ENCODE measurements at regions of chr5 and their contacts with region 1.

Region 1: DNA sequence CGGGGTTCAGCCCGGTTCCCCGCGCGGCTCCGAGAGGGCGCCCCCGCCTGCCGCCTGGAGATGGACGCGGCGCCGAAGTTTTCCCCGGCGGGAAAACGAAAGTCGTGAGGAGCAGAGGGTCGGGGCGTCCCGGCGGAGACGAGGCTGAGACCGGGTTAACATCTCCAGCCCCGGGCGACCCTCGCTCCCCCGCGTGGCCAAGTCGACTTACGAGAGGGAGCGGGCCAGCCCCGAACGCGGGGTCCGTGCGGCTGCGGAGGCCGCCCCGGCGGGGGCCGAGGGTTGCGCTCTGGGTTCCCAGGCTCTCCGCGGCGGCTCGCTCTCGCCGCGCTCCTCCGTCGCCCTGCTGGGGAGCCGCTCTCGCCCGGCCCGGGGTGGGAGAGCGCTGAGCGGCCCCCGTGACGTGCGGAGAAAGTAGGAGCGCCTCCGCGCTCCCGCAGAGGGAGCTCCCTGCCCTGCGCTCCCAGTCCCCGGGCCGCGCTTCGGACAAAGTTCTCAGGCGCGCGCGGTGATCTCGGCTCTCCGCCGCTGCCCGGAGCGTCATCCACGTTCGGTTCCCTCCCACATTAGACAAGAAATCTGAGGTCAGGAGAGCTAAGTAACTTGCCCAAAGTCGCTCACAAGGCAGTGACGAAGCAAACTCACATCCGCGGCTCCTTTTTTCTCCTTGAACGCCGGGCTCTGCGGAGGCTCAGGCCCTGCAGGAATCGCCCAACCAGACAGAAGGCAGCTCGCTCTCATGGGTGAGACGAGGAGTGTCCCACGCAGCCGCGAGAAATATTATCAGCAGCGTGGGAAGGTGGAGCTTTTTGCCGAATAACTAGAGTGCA is 1.2 kb upstream of the GCNT4 start:
- DNase-seq: peak; percentile 67
- H3K4me3 Mint-ChIP-seq: peak overlapping the region; percentile 86
- H3K27ac Mint-ChIP-seq: peak overlapping the region; percentile 92
- H3K4me1 Mint-ChIP-seq: peaks cover 73% of the 10 kb centered on the region
- H3K27me3 Mint-ChIP-seq: no peaks in the 10 kb centered on the region

Region 2: GRCh38 chr5:74112372-74113195 is 940.9 kb before region 1 on chr5:
- CTCF ChIA-PET with region 1: no interaction called
- intact Hi-C with region 1: no loop called
- DNase-seq: no peak
- H3K4me3 Mint-ChIP-seq: no peak overlapping the region
- H3K27ac Mint-ChIP-seq: no peak overlapping the region
- H3K4me1 Mint-ChIP-seq: no peaks in the 10 kb centered on the region
- H3K27me3 Mint-ChIP-seq: peaks cover 19% of the 10 kb centered on the region

Region 3: DNA sequence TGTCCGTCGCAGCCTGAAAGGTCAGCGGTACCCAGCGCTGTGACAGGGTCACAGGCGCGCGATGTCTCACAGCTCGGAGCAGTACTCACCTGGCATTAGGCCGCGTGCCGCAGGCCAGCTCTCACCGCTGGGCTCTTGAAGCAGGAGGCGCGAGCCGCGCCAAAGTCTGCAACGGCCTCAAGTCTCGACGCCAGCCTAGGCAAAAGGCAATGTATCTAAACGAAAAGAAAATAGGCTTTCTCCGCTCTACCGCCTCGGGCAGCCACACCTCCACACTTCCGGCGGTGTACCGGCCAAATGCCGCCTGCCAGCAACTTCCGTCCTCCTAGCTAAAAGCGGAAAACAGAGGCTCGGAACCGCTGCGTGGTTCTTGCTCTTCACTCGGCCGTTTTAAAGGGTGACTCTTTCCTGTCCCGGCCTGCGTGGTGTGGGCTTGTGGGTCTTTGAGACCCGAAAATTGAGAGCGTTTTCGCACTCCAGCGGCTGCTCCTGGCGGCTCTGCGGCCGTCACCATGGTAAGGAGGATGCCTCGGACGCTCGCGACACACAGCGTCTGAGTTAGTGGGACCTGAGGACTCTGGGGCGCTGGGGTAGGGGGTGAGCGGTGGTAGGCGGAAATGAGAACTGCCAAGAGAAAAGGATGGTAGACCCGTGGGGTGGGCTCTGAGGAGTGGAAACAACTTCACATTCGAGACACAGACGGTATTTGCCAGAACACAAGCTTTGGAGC is 286.5 kb before region 1 on chr5 and contains the starts of genes GFM2 and NSA2:
- CTCF ChIA-PET with region 1: no interaction called
- intact Hi-C with region 1: loop called (anchors 5 kb)
- DNase-seq: peak; percentile 96
- H3K4me3 Mint-ChIP-seq: peak within 1 kb of the TSS; percentile 99
- H3K27ac Mint-ChIP-seq: peak within 1 kb of the TSS; percentile 93
- H3K4me1 Mint-ChIP-seq: peaks cover 39% of the 10 kb centered on the region
- H3K27me3 Mint-ChIP-seq: no peaks in the 10 kb centered on the region
- total RNA-seq, gene GFM2: 27.7 to 28.0 TPM
- total RNA-seq, gene NSA2: 119 to 121 TPM

Region 4: GRCh38 chr5:74816875-74817274 is 236.6 kb before region 1 on chr5:
- CTCF ChIA-PET with region 1: no interaction called
- intact Hi-C with region 1: no loop called
- DNase-seq: no peak
- H3K4me3 Mint-ChIP-seq: no peak overlapping the region
- H3K27ac Mint-ChIP-seq: no peak overlapping the region
- H3K4me1 Mint-ChIP-seq: peaks cover 17% of the 10 kb centered on the region
- H3K27me3 Mint-ChIP-seq: no peaks in the 10 kb centered on the region

Region 5: DNA sequence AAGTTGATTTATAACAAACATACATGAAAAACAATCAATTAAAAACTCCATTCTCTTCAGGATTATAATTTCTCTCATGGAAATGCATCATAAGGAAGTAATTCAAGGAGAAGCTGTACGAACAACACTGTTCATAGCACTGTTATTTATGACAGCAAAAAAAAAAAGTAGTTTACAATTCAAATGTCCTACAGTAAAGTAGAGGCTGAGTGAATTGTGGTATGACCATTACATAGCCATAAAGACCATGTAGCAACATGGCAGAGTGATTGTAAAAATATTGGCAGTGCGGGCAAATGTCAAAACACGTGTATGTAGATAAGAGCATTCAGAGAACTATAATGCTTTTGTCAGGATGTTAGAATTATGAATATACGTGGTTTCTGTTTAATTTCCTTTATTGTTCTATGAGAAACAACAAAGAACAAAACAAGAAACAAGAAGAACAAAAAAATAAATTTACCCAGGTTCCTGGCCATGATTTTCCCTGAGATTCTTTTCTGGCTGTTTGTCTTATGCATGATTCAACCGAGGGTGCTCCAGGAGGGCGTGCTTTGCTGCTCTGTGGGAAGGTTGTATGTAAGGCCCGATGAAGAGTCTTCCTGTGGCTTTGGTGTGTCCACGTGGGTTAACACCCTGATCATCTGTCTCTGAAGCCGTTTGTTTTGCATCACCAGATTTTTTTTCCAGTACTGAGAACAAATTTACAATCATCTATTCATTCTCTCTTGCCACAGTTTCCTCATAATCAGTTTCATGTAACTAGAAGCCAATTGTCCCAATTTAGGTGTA is 30.0 kb before region 1 on chr5:
- CTCF ChIA-PET with region 1: interaction called, 12 read pairs
- intact Hi-C with region 1: no loop called
- DNase-seq: peak; percentile 55
- H3K4me3 Mint-ChIP-seq: peak overlapping the region; percentile 8
- H3K27ac Mint-ChIP-seq: no peak overlapping the region
- H3K4me1 Mint-ChIP-seq: peaks cover 32% of the 10 kb centered on the region
- H3K27me3 Mint-ChIP-seq: no peaks in the 10 kb centered on the region

Region 6: GRCh38 chr5:75192804-75193203 is 139.3 kb after region 1 on chr5:
- CTCF ChIA-PET with region 1: interaction called, 3 read pairs
- intact Hi-C with region 1: loop called (anchors 2 kb)
- DNase-seq: peak; percentile 58
- H3K4me3 Mint-ChIP-seq: no peak overlapping the region
- H3K27ac Mint-ChIP-seq: no peak overlapping the region
- H3K4me1 Mint-ChIP-seq: peaks cover 26% of the 10 kb centered on the region
- H3K27me3 Mint-ChIP-seq: no peaks in the 10 kb centered on the region

Region 7: GRCh38 chr5:75511435-75512384 is 458.2 kb after region 1 on chr5 and contains the starts of genes CERT1 and POLK:
- CTCF ChIA-PET with region 1: no interaction called
- intact Hi-C with region 1: loop called (anchors 2 kb)
- DNase-seq: peak; percentile 99
- H3K4me3 Mint-ChIP-seq: peak within 1 kb of the TSS; percentile 96
- H3K27ac Mint-ChIP-seq: peak within 1 kb of the TSS; percentile 89
- H3K4me1 Mint-ChIP-seq: peaks cover 53% of the 10 kb centered on the region
- H3K27me3 Mint-ChIP-seq: no peaks in the 10 kb centered on the region
- total RNA-seq, gene CERT1: 17.1 to 18.5 TPM
- total RNA-seq, gene POLK: 26.8 to 29.0 TPM

Region 8: DNA sequence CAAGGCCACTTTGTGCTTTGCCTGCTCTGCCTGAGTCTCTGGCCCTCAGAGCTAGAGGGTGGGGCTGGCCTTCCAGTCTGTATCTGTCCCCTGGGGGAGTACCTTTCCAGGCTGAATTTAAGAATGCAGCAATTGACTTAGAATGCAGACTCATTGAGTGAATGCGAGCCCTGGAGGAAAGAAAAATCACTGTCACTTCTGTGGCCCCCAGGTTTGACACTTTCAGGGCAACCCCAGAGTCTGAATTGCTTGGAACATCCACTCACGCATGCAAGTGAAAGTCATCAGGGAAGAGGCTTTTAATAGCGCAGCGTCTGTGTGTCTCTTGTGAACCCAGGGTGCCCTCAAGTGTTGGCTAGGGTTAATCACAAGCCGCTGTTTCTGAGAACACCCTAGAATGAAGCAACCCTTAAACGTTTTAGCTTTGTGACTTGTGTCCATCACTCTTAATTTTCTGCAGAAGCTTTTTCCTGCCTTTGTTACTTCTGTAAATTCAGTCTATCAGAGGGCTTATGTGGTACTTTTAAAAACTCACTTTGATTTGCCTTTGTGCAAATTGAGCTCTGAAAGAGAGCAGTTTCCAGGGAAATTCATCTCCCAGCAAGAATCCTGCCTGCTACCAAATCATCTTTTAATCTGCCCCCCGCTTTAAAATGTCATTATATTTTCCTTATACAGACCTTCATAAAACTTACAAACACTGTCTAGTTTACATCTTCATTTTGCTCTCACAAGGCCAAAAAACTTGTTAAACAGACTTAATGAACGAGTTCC is 1202.8 kb after region 1 on chr5:
- CTCF ChIA-PET with region 1: no interaction called
- intact Hi-C with region 1: loop called (anchors 5 kb)
- DNase-seq: peak; percentile 79
- H3K4me3 Mint-ChIP-seq: no peak overlapping the region
- H3K27ac Mint-ChIP-seq: no peak overlapping the region
- H3K4me1 Mint-ChIP-seq: peaks cover 2% of the 10 kb centered on the region
- H3K27me3 Mint-ChIP-seq: peaks cover 3% of the 10 kb centered on the region

Measured in activated naive CD4-positive, alpha-beta T cell treated with anti-CD3 and anti-CD28 coated beads for 36 hours (primary cell).